MCF 10A (cell line): ENCODE measurements at regions of chr22 and their contacts with region 1.

Region 1: GRCh38 chr22:36856121-36856791 is 4.5 kb upstream of the NCF4 start:
- DNase-seq: peak; percentile 87
- H3K4me3 Mint-ChIP-seq: peak overlapping the region; percentile 2
- H3K27ac Mint-ChIP-seq: no peak overlapping the region
- H3K4me1 Mint-ChIP-seq: peaks cover 14% of the 10 kb centered on the region
- H3K27me3 Mint-ChIP-seq: peaks cover 28% of the 10 kb centered on the region
- CTCF ChIP-seq: peak; percentile 100

Region 2: DNA sequence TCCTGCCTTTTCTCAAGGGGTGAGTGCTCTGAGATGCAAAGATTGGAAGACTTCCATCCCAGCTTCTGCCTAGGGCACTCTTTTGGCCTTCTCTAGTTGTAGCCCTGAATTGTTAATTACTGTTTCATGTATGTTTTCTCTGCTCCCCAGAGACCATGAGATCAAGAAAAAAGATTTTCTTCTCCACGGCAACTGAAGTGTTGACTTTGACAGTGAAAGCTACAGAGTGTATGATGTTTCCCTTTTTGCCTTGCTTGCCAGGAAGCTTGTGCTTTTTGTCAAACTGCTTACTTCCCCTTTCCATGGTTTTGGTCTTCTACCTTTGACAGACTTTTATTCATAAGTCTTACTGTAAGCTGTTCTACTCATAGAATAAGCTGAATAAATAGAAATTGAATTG is 304.0 kb before region 1 on chr22:
- CTCF ChIA-PET with region 1: interaction called, 43 read pairs
- POLR2A ChIA-PET with region 1: no interaction called
- intact Hi-C with region 1: no loop called
- DNase-seq: no peak
- H3K4me3 Mint-ChIP-seq: no peak overlapping the region
- H3K27ac Mint-ChIP-seq: no peak overlapping the region
- H3K4me1 Mint-ChIP-seq: peaks cover 3% of the 10 kb centered on the region
- H3K27me3 Mint-ChIP-seq: peaks cover 38% of the 10 kb centered on the region
- CTCF ChIP-seq: no peak

Region 3: DNA sequence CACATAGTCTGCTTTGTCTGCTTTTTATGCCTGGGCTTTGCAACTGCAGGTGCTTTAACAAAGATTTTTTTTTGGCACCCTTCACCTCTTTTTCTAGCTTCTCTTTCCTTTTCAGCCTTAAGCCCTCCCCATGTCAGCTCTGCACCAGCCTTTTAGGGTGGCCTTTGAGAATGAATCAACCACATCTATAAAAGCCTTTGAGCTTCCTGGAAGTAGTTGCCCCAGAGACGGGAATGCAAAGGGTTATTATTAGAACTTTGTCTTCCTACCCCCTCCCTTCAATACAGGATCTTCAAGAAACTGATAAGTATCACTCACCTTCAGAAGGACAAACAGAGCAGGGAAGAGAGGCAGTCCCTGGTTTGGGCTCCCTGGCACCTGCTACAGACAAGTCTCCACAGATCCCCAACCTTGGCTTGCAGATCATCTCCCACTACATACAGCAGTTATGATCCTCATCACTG is 47.5 kb before region 1 on chr22:
- CTCF ChIA-PET with region 1: interaction called, 15 read pairs
- POLR2A ChIA-PET with region 1: interaction called, 3 read pairs
- intact Hi-C with region 1: no loop called
- DNase-seq: no peak
- H3K4me3 Mint-ChIP-seq: no peak overlapping the region
- H3K27ac Mint-ChIP-seq: no peak overlapping the region
- H3K4me1 Mint-ChIP-seq: no peaks in the 10 kb centered on the region
- H3K27me3 Mint-ChIP-seq: peaks cover 45% of the 10 kb centered on the region
- CTCF ChIP-seq: no peak

Region 4: GRCh38 chr22:36839356-36840073 is 16.7 kb before region 1 on chr22:
- CTCF ChIA-PET with region 1: interaction called, 12 read pairs
- POLR2A ChIA-PET with region 1: no interaction called
- intact Hi-C with region 1: no loop called
- DNase-seq: no peak
- H3K4me3 Mint-ChIP-seq: no peak overlapping the region
- H3K27ac Mint-ChIP-seq: no peak overlapping the region
- H3K4me1 Mint-ChIP-seq: peaks cover 8% of the 10 kb centered on the region
- H3K27me3 Mint-ChIP-seq: peaks cover 35% of the 10 kb centered on the region
- CTCF ChIP-seq: no peak

Region 5: GRCh38 chr22:36977947-36978660 is 121.8 kb after region 1 on chr22:
- CTCF ChIA-PET with region 1: interaction called, 73 read pairs
- POLR2A ChIA-PET with region 1: interaction called, 5 read pairs
- intact Hi-C with region 1: loop called (anchors 1 kb)
- DNase-seq: peak; percentile 87
- H3K4me3 Mint-ChIP-seq: peak overlapping the region; percentile 67
- H3K27ac Mint-ChIP-seq: peak overlapping the region; percentile 73
- H3K4me1 Mint-ChIP-seq: peaks cover 10% of the 10 kb centered on the region
- H3K27me3 Mint-ChIP-seq: no peaks in the 10 kb centered on the region
- CTCF ChIP-seq: peak; percentile 84